Left colon (tissue), 2 donors: ENCODE measurements at regions of chr2 and their contacts with region 1.

Region 1: DNA sequence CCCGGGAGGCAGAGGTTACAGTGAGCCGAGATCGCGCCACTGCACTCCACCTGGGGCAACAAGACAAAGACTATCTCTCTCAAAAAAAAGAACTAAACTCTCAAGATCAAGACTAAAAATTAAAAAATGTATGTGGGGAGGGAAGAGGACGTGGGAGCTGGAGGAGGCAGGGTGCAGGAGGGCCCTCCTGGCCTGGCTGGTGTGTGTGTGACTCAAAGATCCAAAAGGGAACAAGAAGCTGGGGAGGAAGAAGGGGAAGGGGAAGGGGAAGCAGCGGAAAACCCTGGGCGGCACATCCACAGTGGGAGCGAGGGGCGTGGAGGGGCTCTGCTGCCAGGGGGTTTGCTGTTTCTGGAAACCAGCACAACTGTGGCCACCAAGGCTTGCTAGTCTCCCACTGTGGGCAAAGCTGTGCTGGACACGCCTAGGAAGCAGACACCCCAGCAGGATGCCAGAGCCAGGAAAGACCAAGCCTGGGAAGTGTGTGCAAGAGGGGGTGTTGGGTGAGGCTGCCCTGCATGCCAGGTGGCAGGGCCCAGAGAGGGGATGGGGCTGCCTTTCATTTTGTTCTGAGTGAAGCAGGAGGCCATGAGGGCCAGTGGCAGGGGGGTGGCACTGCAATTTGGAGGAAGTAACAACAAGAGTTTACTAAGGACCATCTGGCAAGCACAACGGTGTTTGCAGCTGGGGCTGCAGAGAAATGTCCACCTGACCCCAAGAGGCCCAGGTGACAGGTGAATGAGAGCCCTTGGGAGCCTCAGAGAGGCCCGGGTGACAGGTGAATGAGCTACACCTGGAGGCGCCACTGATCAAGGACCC is 44.5 kb downstream of the ANO7 start:
- DNase-seq: no peak
- ATAC-seq: no peak

Region 2: DNA sequence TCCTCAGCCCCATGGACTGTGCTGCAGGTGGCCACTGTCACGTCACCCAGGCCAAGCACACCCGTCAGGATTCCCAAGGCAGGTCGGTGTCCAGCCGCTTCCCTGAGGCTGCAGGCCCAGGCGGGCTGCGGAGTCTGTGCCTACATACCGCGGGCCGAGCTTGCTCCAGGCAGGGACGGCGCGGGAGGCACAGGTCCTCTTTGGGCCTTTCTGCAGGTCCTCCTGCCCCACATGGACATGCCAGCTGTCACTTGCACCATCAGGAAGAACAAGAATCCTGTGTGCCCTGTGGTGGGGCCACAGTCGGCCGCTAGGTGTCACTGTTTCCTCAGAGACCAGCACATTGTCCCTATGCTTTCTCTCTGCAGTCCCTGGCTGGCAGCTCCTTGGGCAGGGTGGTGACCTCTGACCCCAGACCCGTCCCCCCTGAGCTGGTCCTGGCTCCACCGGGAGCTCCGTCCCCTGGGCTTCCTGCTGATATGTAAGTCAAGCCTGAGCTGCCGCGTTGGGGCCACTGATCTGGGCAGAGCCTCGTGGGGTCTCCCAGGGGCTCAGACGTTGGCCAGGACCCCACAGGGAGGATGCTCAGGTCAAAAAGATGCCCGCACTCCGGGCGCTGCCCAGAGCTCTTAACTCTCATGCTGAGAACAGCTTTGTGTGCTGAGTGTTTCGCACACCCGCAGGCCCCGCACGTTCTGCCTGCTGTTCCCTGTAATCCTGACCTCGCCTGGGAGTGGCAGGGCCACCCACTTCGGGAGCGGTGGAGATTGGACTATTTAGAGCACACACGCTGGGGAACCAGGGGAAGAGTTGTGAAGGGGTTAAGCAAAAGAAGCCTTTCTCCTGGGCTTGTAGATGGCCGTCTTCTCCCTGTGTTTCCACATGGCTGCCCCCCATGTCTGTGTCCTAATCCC is 381.6 kb before region 1 on chr2:
- intact Hi-C with region 1: loop called in 1 of 2 experiments (anchors 10 kb)
- DNase-seq: peak; percentile 73 to 91
- ATAC-seq: peak; percentile 91

Region 3: DNA sequence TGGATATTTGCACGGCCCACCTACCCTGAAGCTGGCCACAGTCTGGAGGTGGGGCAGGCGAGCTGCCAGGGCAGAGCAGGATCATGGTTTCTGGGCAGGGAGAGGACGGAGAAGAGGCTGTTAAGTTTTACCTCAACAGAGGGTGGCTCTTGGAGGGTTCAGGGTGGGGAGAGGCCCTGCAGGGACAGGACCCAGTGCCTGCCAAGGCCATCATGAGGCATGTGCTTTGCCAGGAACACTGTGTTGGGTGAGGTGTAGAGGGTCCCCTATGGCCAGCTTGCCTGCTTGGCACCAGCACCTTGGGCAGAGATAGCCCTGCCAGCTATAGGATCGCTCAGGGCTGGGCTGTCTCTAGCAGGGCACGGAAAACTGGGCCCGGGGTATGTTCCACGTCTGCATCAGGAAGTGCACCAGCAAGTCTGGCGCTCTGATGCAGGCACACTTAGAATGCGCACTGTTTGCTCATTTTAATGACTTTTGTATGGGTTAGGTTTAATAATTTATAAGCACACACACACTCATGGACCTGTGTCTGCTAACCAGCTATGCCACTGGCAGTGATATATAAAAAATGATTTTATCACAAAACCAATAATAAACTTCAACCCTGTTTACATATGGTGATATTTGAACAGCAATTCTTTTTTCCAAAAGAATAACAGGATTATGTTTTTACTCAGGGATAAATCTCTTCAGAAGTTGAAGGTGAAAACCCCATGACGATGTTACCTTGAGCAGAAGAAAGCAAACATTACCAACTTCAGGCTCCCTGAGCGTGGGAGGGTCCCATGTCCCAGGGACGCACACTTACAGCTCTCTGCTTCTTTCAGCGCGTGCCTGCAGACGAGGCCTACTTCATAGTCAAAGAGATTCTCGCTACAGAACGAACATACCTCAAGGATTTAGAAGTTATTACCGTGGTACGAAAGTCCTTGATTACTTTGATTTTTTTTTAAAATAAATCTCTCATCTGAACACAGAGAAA is 229.0 kb after region 1 on chr2:
- intact Hi-C with region 1: no loop called
- DNase-seq: peak; percentile 37 to 47
- ATAC-seq: peak; percentile 81